AG04449 (cell line): ENCODE measurements at regions of chr6 and their contacts with region 1.

Region 1: GRCh38 chr6:49531774-49532569 is 18.5 kb upstream of the C6orf141 start:
- DNase-seq: no peak
- H3K4me3 ChIP-seq: no peak overlapping the region
- CTCF ChIP-seq: peak; percentile 63

Region 2: GRCh38 chr6:49453221-49453620 is 78.8 kb before region 1 on chr6:
- CTCF ChIA-PET with region 1: no interaction called
- POLR2A ChIA-PET with region 1: no interaction called
- DNase-seq: no peak
- H3K4me3 ChIP-seq: no peak overlapping the region
- CTCF ChIP-seq: no peak

Region 3: GRCh38 chr6:49513153-49513989 is 18.6 kb before region 1 on chr6:
- CTCF ChIA-PET with region 1: interaction called, 13 read pairs
- POLR2A ChIA-PET with region 1: no interaction called
- DNase-seq: no peak
- H3K4me3 ChIP-seq: no peak overlapping the region
- CTCF ChIP-seq: no peak

Region 4: DNA sequence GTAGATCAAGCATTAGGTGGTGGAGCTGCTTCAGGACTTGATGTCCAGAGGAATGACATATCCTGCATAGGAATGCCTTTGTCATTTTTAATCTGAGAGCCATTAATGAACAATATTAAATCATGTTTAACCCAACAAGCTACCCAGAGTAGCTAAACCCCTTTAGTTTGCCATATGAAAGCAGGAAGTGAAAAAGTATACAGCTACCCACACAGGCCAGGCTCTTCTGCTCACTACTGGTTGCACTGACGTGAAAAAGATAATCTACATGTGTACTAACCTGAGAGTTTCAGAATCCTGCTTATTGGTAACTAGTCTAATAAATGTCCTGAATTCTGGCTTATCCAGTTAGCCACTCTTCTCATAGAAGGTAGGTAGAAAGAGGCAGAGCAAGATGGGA is 12.3 kb before region 1 on chr6:
- CTCF ChIA-PET with region 1: interaction called, 13 read pairs
- POLR2A ChIA-PET with region 1: no interaction called
- DNase-seq: no peak
- H3K4me3 ChIP-seq: no peak overlapping the region
- CTCF ChIP-seq: no peak

Region 5: GRCh38 chr6:49550492-49551077 is 18.6 kb after region 1 on chr6 and contains the start of gene C6orf141:
- CTCF ChIA-PET with region 1: interaction called, 18 read pairs
- POLR2A ChIA-PET with region 1: no interaction called
- DNase-seq: no peak
- H3K4me3 ChIP-seq: peak within 1 kb of the TSS; percentile 43
- CTCF ChIP-seq: no peak

Region 6: DNA sequence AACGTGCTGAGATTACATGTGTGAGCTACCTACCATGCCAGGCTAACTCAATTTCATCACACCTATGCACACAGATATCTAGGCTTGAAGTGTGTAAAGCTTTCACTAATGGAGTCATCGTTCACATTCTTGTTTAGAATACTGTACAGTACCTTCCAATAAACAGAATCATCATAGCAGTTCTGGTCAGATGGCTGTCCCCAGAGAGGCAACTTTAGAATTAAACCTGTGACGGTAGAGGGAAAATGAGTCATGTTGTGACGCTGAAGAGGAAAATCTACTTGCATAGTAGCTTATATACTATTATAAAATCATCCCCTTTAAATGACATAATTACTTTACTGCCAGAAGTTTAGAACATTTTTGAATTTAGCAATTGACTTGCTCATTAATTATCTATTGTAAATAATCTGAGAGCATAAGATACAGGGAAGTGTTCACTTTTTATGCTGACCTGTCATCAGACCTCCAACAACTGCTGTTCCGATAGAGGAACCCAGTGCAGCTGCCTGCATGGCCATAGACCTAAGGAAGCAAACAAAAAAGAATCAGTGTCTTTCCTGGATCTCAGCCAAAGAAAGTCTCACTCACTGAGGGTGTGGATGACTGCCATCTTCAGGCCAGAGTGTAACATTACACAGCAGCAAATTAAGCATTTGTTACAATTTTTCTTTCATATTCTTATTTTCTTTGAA is 74.9 kb after region 1 on chr6:
- CTCF ChIA-PET with region 1: interaction called, 70 read pairs
- POLR2A ChIA-PET with region 1: no interaction called
- DNase-seq: peak; percentile 29
- H3K4me3 ChIP-seq: no peak overlapping the region
- CTCF ChIP-seq: peak; percentile 81

Region 7: DNA sequence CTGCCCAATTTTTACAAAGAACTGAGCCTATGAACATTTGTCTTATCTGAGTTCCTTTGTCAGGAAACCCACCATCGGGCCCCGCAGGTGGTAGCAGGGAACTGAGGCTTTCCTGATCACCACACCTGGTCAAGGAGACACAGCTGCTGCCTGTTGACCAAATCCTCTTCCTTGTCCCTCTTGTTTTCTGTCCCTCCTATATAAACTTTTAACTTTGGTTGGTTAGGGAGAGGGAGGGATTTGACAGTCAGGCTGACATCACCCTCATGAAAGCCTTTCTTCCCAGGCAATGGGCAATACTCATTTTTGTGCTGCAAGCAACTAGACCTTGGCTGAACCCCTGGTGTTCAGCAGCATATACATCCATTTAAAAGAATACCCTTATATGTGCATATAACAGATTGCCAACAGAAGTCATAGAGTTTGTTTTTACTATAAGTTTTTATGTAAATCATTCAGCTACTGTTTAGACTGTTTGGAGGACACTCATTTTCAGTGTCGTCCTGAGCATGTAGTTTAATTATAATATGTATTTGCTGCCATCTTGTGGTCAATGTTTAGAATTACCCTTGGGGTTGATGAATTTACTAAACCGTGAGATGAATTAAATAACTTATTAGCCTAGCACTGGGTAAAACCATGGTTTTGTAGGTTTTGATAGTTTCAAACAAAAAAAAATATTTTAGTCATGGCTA is 317.4 kb after region 1 on chr6:
- CTCF ChIA-PET with region 1: interaction called, 29 read pairs
- POLR2A ChIA-PET with region 1: no interaction called
- DNase-seq: peak; percentile 10
- H3K4me3 ChIP-seq: no peak overlapping the region
- CTCF ChIP-seq: peak; percentile 26